ENCODE measurements at regions of chr14 and their contacts with region 1.

Region 1: DNA sequence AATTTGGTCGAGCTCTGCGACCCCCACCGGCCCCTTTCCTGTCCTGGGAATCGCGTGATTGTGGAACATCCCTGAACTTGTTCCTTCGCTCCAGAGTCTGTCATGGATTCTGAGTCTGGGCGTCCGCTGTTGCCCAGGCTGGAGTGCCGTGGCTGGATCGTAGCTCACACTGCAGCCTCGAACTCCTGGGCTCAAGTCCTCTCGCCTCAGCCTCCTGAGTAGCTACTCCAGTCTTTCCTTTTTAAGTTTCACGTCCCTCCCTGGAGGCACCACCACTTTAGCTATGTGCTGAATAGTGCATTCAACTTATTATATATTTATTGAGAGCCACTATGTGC is 698 bp downstream of the ACOT6 start:
- DNase-seq: no peak
- ATAC-seq: no peak
- H3K4me3 ChIP-seq: peak overlapping the region; percentile 49 to 74
- H3K27ac ChIP-seq: peak overlapping the region; percentile 16 to 75
- H3K4me1 ChIP-seq: no peaks in the 10 kb centered on the region
- H3K27me3 ChIP-seq: no peaks in the 10 kb centered on the region

Region 2: DNA sequence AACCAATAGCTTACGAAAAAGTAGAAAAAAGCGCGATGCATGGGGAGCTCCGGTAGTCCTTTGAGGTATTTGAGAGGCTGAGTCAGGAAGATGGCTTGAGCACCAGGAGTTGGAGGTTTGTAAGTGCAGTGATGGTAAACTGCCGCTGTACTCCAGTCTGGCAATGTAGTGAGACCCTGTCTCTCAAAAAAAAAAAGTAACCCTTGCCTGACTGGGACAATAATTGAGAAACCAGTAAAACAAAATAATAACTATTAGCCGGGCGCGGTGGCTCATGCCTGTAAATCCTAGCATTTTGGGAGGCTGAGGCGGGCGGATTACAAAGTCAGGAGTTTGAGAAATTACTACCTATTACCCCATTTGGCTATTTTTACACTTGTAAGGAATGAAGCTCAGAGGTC is 44.6 kb before region 1 on chr14:
- intact Hi-C with region 1: loop called in 1 of 2 experiments (anchors 10 kb)
- DNase-seq: no peak
- ATAC-seq: no peak
- H3K4me3 ChIP-seq: peak overlapping the region; percentile 63 to 82
- H3K27ac ChIP-seq: peak overlapping the region; percentile 52 to 98
- H3K4me1 ChIP-seq: no peaks in the 10 kb centered on the region
- H3K27me3 ChIP-seq: no peaks in the 10 kb centered on the region

Region 3: DNA sequence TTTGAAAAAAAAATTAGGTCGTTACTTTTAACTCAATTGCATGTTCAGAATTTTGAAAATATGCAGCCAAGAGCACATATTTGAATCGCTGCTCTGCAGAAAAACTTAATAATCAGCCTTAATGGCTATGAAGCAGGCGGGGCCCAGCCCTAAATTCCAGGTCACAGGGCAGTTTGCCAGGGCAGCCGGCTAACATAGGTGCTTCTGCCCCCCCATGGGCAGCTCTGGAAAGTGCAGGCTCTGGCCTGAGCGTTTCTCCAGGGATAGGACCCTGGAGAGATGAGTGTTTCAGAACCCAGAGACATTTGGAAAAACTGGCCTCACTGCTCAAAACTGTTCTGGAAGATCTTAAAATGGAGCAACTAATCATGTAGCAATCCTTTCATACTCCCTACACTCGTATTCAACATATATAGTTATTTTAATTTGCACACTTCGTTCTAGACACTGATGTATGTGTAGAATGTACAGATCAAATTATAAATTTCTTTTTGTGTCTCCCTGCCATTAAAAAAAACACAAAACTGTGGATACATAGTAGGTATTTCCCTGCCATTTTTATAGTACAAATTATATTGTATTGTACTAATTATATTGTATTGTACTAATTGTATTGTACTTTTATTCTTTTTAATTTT is 212.7 kb after region 1 on chr14:
- intact Hi-C with region 1: no loop called
- DNase-seq: peak; percentile 94 to 97
- ATAC-seq: peak; percentile 95
- H3K4me3 ChIP-seq: no peak overlapping the region
- H3K27ac ChIP-seq: no peak overlapping the region
- H3K4me1 ChIP-seq: no peaks in the 10 kb centered on the region
- H3K27me3 ChIP-seq: no peaks in the 10 kb centered on the region

Measured in aorta (tissue), 5 donors.